Posterior vena cava (tissue), 2 donors: ENCODE measurements at regions of chr4 and their contacts with region 1.

Region 1: GRCh38 chr4:25621027-25621930 is 34.4 kb upstream of the SLC34A2 start:
- DNase-seq: no peak

Region 2: GRCh38 chr4:25477221-25477620 is 144.1 kb before region 1 on chr4:
- intact Hi-C with region 1: no loop called
- DNase-seq: no peak

Region 3: DNA sequence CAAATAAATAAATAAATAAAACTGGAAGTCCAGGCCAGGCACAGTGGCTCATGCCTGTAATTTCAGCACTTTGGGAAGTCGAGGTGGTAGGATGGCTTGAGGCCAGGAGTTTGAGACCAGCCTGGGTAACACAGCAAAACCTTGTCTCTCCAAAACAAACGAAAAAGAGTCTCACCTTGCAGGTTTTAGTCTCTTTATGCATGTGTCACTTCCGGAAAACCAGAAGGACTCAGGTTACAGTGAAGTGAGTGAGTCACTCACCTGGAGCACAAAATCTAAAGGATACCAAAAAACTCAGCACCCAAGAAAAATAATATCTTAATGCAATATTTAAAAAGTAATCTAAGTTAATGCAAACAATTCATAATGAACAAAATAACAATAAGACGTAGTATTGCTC is 14.2 kb after region 1 on chr4:
- intact Hi-C with region 1: no loop called
- DNase-seq: no peak

Region 4: GRCh38 chr4:25702848-25703247 is 81.6 kb after region 1 on chr4:
- intact Hi-C with region 1: no loop called
- DNase-seq: no peak

Region 5: GRCh38 chr4:25966171-25966570 is 344.9 kb after region 1 on chr4:
- intact Hi-C with region 1: loop called in 1 of 2 experiments (anchors 10 kb)
- DNase-seq: no peak

Region 6: GRCh38 chr4:26061248-26061986 is 440.1 kb after region 1 on chr4:
- intact Hi-C with region 1: no loop called
- DNase-seq: no peak